ENCODE measurements at regions of chr6 and their contacts with region 1.

Region 1: GRCh38 chr6:138287144-138287955 is 69.1 kb upstream of the PBOV1 start:
- DNase-seq: peak; percentile 58
- ATAC-seq: peak; percentile 85
- H3K4me3 ChIP-seq: no peak overlapping the region
- H3K27ac ChIP-seq: no peak overlapping the region
- H3K4me1 ChIP-seq: 0 out of 2 replicates have a peak, but pooled peaks cover 5% of the 10 kb centered on the region
- H3K27me3 ChIP-seq: no peaks in the 10 kb centered on the region
- CTCF ChIP-seq: peak; percentile 95
- EP300 ChIP-seq: no peak
- POLR2A ChIP-seq: no peak
- RAD21 ChIP-seq: peak; percentile 83

Region 2: GRCh38 chr6:137866914-137867684 is 420.3 kb before region 1 on chr6 and contains the start of gene TNFAIP3:
- CTCF ChIA-PET with region 1: no interaction called
- POLR2A ChIA-PET with region 1: no interaction called
- in situ Hi-C with region 1: no loop called
- intact Hi-C with region 1: no loop called
- DNase-seq: peak; percentile 94
- ATAC-seq: peak; percentile 85
- H3K4me3 ChIP-seq: peak within 1 kb of the TSS; percentile 75 to 100 (median 92)
- H3K27ac ChIP-seq: peak within 1 kb of the TSS; percentile 92
- H3K4me1 ChIP-seq: peaks cover 75% of the 10 kb centered on the region
- H3K27me3 ChIP-seq: no peaks in the 10 kb centered on the region; a peak in 1 of 5 replicates
- CTCF ChIP-seq: peak; percentile 85
- EP300 ChIP-seq: peak in 1 of 2 experiments; percentile 71; a peak in 2 of 4 replicates
- POLR2A ChIP-seq: peak; percentile 88 to 95
- RAD21 ChIP-seq: peak; percentile 99
- total RNA-seq, gene TNFAIP3: 24.7 and 28.2 TPM in 2 replicates

Region 3: GRCh38 chr6:138001750-138002349 is 285.5 kb before region 1 on chr6:
- CTCF ChIA-PET with region 1: interaction called, 3 read pairs
- POLR2A ChIA-PET with region 1: no interaction called
- in situ Hi-C with region 1: loop called (anchors 5 kb)
- intact Hi-C with region 1: loop called (anchors 5 kb)
- DNase-seq: peak; percentile 44
- ATAC-seq: peak; percentile 51
- H3K4me3 ChIP-seq: no peak overlapping the region
- H3K27ac ChIP-seq: no peak overlapping the region
- H3K4me1 ChIP-seq: 0 out of 2 replicates have a peak, but pooled peaks cover 6% of the 10 kb centered on the region
- H3K27me3 ChIP-seq: no peaks in the 10 kb centered on the region
- CTCF ChIP-seq: peak; percentile 88
- EP300 ChIP-seq: no peak
- POLR2A ChIP-seq: no peak
- RAD21 ChIP-seq: peak; percentile 87

Region 4: GRCh38 chr6:138403801-138404661 is 116.7 kb after region 1 on chr6 and contains the start of gene HEBP2:
- CTCF ChIA-PET with region 1: interaction called, 8 read pairs
- POLR2A ChIA-PET with region 1: no interaction called
- in situ Hi-C with region 1: no loop called
- intact Hi-C with region 1: loop called (anchors 2 kb)
- DNase-seq: peak; percentile 96
- ATAC-seq: peak; percentile 90
- H3K4me3 ChIP-seq: peak within 1 kb of the TSS; percentile 73 to 89 (median 84)
- H3K27ac ChIP-seq: peak within 1 kb of the TSS; percentile 55
- H3K4me1 ChIP-seq: peaks cover 19% of the 10 kb centered on the region
- H3K27me3 ChIP-seq: no peaks in the 10 kb centered on the region; a peak in 2 of 5 replicates
- CTCF ChIP-seq: peak; percentile 86
- EP300 ChIP-seq: peak; percentile 28 to 58; a peak in 3 of 4 replicates
- POLR2A ChIP-seq: peak; percentile 27 to 75; a peak in 3 of 4 replicates
- RAD21 ChIP-seq: peak; percentile 97
- total RNA-seq, gene HEBP2: 63.5 and 72.8 TPM in 2 replicates

Region 5: DNA sequence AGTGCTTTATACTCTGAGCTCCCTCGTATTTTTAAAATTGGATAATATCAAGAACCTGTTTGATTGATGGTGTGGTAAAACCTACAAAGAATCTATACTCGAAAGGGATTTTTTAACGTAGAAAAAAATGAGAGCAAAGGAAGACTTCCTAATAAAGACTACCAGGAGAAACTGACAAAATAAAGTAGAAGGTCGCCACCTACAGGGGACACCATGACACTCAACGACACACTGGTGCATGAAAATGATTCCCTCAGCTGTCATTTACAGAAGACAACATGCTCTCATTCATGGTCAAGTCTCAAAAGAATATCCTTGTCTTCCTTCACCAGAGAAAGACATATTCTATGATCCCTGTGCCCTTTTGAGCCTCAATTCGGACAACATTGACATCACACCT is 222.0 kb after region 1 on chr6:
- CTCF ChIA-PET with region 1: no interaction called
- POLR2A ChIA-PET with region 1: no interaction called
- in situ Hi-C with region 1: no loop called
- intact Hi-C with region 1: loop called (anchors 5 kb)
- DNase-seq: peak; percentile 71
- ATAC-seq: peak; percentile 31; the same call in 2 of the 3 replicates
- H3K4me3 ChIP-seq: no peak overlapping the region
- H3K27ac ChIP-seq: no peak overlapping the region
- H3K4me1 ChIP-seq: peaks cover 54% of the 10 kb centered on the region
- H3K27me3 ChIP-seq: no peaks in the 10 kb centered on the region
- CTCF ChIP-seq: peak; percentile 90
- EP300 ChIP-seq: no peak
- POLR2A ChIP-seq: no peak
- RAD21 ChIP-seq: peak; percentile 63; the same call in 1 of the 2 replicates

Measured in HepG2 (cell line).